Right cardiac atrium (tissue), 5 donors: ENCODE measurements at regions of chr2 and their contacts with region 1.

Region 1: DNA sequence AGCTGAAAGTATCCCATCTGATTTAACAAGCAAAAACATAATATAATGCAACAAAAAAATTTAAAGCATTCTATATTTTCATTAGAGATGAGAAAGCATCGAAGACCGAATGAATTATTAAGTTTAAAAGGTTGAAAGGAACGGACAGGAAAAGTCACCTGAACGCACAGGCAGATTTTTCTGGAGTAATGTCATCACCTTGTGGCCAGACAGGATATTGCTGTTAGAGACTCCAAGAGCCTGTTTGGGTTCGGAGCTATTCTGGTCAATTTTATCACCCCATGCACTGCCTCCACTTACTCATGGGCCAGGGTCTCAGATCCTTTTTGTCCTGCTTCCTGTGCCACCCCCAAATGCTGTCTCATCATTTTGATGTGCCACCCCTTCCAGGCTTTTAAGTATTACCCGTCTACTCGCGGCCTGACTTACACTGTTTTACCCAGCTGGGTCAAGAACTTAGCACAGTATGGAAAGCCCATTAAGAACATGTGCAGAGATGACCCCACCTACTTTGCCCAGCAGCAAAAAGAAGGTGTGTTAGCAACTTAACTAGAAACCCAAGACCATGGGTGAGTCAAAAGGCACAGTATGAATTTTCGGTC is 27.3 kb downstream of the GKN2 start:
- DNase-seq: no peak
- ATAC-seq: peak; percentile 62 to 72
- H3K4me3 ChIP-seq: no peak overlapping the region
- H3K27ac ChIP-seq: no peak overlapping the region
- H3K4me1 ChIP-seq: no peaks in the 10 kb centered on the region
- H3K27me3 ChIP-seq: no peaks in the 10 kb centered on the region

Region 2: GRCh38 chr2:68467077-68467960 is 458.1 kb before region 1 on chr2 and contains the starts of genes APLF and FBXO48:
- intact Hi-C with region 1: loop called in 1 of 4 experiments (anchors 10 kb)
- DNase-seq: peak; percentile 97 to 99 (median 98)
- ATAC-seq: peak; percentile 99
- H3K4me3 ChIP-seq: peak within 1 kb of the TSS; percentile 89
- H3K27ac ChIP-seq: peak within 1 kb of the TSS; percentile 85
- H3K4me1 ChIP-seq: peaks cover 3% of the 10 kb centered on the region
- H3K27me3 ChIP-seq: no peaks in the 10 kb centered on the region
- total RNA-seq, gene APLF: 6.2 to 7.6 (median 6.7) TPM
- total RNA-seq, gene FBXO48: 0.42 to 1.1 (median 0.95) TPM

Region 3: DNA sequence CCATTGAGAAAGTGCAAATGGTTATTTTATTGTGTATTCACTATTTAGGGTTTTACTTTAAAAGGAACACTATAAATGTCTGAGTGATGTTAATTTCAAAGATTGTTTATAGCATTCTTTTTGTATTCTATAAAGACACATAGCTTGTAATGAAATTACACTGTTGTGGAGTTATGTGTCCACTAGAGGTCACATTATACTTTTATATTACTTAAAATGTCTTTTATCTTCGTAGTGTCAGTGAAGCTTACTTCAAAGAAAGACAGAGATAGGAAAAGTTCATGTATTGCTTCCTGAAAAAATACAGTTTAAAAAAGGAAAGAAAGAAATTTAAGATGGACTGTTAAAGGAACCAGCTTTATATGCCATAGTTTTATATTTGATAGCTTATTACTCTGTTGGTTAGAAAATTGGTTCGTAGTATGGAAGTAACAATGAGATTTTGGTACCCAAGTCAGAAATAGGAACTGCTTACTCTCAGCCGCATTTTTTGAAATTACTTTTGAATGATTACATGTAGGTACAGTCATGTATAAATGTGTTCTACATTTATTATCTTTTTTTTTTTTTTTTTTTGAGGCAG is 437.5 kb before region 1 on chr2:
- intact Hi-C with region 1: loop called in 1 of 4 experiments (anchors 10 kb)
- DNase-seq: no peak
- ATAC-seq: no peak
- H3K4me3 ChIP-seq: no peak overlapping the region
- H3K27ac ChIP-seq: no peak overlapping the region
- H3K4me1 ChIP-seq: no peaks in the 10 kb centered on the region
- H3K27me3 ChIP-seq: no peaks in the 10 kb centered on the region

Region 4: DNA sequence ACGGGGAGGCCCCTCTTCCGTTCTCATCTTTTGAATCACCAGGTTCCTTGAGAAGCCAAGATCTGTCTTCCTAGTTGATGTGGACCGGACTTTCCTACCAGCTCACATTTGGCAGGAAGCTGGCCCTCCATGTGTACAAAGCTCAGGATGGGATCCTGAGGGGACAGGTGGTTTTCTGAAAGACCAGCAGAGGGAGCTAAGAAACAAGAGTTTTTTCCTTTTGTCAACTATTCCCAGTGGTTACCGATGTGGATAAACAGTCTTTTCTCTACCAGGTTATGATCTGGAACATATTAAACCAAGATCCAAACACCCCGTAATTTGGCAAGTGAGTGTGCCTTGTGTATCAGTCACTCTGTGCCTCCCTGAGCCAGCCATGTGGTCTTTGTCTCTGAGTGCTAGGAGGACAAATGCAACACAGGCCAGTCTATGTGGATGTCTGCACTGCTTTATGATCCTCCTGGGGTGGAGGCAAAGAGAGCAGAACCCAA is 215.9 kb before region 1 on chr2:
- intact Hi-C with region 1: loop called (anchors 5 to 10 kb)
- DNase-seq: no peak
- ATAC-seq: peak; percentile 71 to 84
- H3K4me3 ChIP-seq: no peak overlapping the region
- H3K27ac ChIP-seq: no peak overlapping the region
- H3K4me1 ChIP-seq: no peaks in the 10 kb centered on the region
- H3K27me3 ChIP-seq: no peaks in the 10 kb centered on the region

Region 5: GRCh38 chr2:68715353-68716041 is 209.9 kb before region 1 on chr2:
- intact Hi-C with region 1: loop called in 2 of 4 experiments (anchors 5 to 10 kb)
- DNase-seq: peak in 2 of 3 donors; percentile 29 to 70
- ATAC-seq: peak; percentile 59 to 69
- H3K4me3 ChIP-seq: no peak overlapping the region
- H3K27ac ChIP-seq: no peak overlapping the region
- H3K4me1 ChIP-seq: no peaks in the 10 kb centered on the region
- H3K27me3 ChIP-seq: no peaks in the 10 kb centered on the region

Region 6: GRCh38 chr2:68751397-68752339 is 173.7 kb before region 1 on chr2:
- intact Hi-C with region 1: loop called in 2 of 4 experiments (anchors 5 to 10 kb)
- DNase-seq: peak; percentile 91 to 95 (median 94)
- ATAC-seq: peak; percentile 92
- H3K4me3 ChIP-seq: no peak overlapping the region
- H3K27ac ChIP-seq: no peak overlapping the region
- H3K4me1 ChIP-seq: peaks cover 2% of the 10 kb centered on the region
- H3K27me3 ChIP-seq: no peaks in the 10 kb centered on the region

Region 7: GRCh38 chr2:69469784-69470183 is 544.4 kb after region 1 on chr2:
- intact Hi-C with region 1: no loop called
- DNase-seq: no peak
- ATAC-seq: no peak
- H3K4me3 ChIP-seq: no peak overlapping the region
- H3K27ac ChIP-seq: no peak overlapping the region
- H3K4me1 ChIP-seq: no peaks in the 10 kb centered on the region
- H3K27me3 ChIP-seq: no peaks in the 10 kb centered on the region